HepG2 (cell line): ENCODE measurements at regions of chr3 and their contacts with region 1.

Region 1: GRCh38 chr3:161423911-161424522 is 52.7 kb upstream of the SPTSSB start:
- DNase-seq: peak; percentile 41
- ATAC-seq: no peak
- H3K4me3 ChIP-seq: no peak overlapping the region
- H3K27ac ChIP-seq: no peak overlapping the region
- H3K4me1 ChIP-seq: peaks cover 53% of the 10 kb centered on the region
- H3K27me3 ChIP-seq: peaks cover 0 to 4% of the 10 kb centered on the region in 2 experiments; a peak in 1 of 5 replicates
- CTCF ChIP-seq: peak; percentile 64
- EP300 ChIP-seq: no peak
- POLR2A ChIP-seq: no peak
- RAD21 ChIP-seq: peak; percentile 67; the same call in 1 of the 2 replicates

Region 2: GRCh38 chr3:160686955-160687535 is 737.0 kb before region 1 on chr3:
- CTCF ChIA-PET with region 1: no interaction called
- POLR2A ChIA-PET with region 1: no interaction called
- in situ Hi-C with region 1: no loop called
- intact Hi-C with region 1: loop called (anchors 5 kb)
- DNase-seq: peak; percentile 6
- ATAC-seq: no peak
- H3K4me3 ChIP-seq: no peak overlapping the region
- H3K27ac ChIP-seq: no peak overlapping the region
- H3K4me1 ChIP-seq: no peaks in the 10 kb centered on the region
- H3K27me3 ChIP-seq: no peaks in the 10 kb centered on the region; a peak in 1 of 5 replicates
- CTCF ChIP-seq: 0 out of 2 replicates have a peak, but pooled peaks have one; percentile 9
- EP300 ChIP-seq: no peak
- POLR2A ChIP-seq: no peak
- RAD21 ChIP-seq: no peak

Region 3: DNA sequence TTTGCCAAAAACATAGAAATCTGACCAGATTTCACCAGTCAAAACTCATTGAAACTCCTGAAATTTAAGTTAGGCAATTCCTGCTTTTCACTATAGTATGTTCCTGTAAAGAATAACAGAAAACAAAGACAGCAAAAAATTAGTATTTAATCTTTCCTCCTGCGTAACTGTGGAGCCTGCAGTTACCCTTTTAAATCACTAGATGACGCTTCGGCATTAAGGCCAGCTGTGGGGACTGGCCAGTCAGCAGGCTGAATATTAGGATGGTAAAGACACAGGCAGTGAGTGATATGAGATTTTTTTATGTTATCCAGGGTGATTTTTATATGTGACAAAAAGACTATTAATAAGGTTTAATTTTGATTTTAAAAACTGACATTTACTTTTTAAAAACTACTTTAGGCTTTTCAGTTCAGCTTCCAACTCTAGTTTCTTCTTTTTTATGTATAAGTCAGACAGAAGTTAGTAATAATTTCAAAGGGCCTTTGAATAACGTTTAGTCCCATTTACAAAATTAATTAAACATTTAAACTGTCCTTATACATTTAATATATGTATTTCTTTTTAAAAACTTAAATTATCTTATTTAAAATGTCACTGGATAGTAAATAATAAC is 502.9 kb before region 1 on chr3:
- CTCF ChIA-PET with region 1: interaction called, 5 read pairs
- POLR2A ChIA-PET with region 1: no interaction called
- in situ Hi-C with region 1: loop called (anchors 10 kb)
- intact Hi-C with region 1: loop called (anchors 1 kb)
- DNase-seq: peak; percentile 30
- ATAC-seq: peak; percentile 96
- H3K4me3 ChIP-seq: no peak overlapping the region
- H3K27ac ChIP-seq: no peak overlapping the region
- H3K4me1 ChIP-seq: no peaks in the 10 kb centered on the region
- H3K27me3 ChIP-seq: no peaks in the 10 kb centered on the region
- CTCF ChIP-seq: peak; percentile 84
- EP300 ChIP-seq: no peak
- POLR2A ChIP-seq: no peak
- RAD21 ChIP-seq: peak; percentile 55

Region 4: GRCh38 chr3:160956806-160957205 is 467.2 kb before region 1 on chr3:
- CTCF ChIA-PET with region 1: no interaction called
- POLR2A ChIA-PET with region 1: no interaction called
- in situ Hi-C with region 1: no loop called
- intact Hi-C with region 1: loop called (anchors 5 kb)
- DNase-seq: peak; percentile 8
- ATAC-seq: peak; percentile 84
- H3K4me3 ChIP-seq: no peak overlapping the region
- H3K27ac ChIP-seq: no peak overlapping the region
- H3K4me1 ChIP-seq: no peaks in the 10 kb centered on the region
- H3K27me3 ChIP-seq: no peaks in the 10 kb centered on the region
- CTCF ChIP-seq: peak; percentile 55
- EP300 ChIP-seq: no peak
- POLR2A ChIP-seq: no peak
- RAD21 ChIP-seq: no peak

Region 5: GRCh38 chr3:161220850-161221753 is 202.9 kb before region 1 on chr3 and contains the start of gene NMD3:
- CTCF ChIA-PET with region 1: no interaction called
- POLR2A ChIA-PET with region 1: interaction called, 4 read pairs
- in situ Hi-C with region 1: no loop called
- intact Hi-C with region 1: loop called (anchors 2 kb)
- DNase-seq: peak; percentile 87
- ATAC-seq: peak; percentile 96
- H3K4me3 ChIP-seq: peak within 1 kb of the TSS; percentile 84 to 99 (median 92)
- H3K27ac ChIP-seq: peak within 1 kb of the TSS; percentile 90
- H3K4me1 ChIP-seq: peaks cover 42% of the 10 kb centered on the region
- H3K27me3 ChIP-seq: no peaks in the 10 kb centered on the region; a peak in 2 of 5 replicates
- CTCF ChIP-seq: no peak
- EP300 ChIP-seq: 0 out of 4 replicates have a peak, but pooled peaks of 1 of the 2 experiments have one; percentile 0
- POLR2A ChIP-seq: peak; percentile 79 to 88
- RAD21 ChIP-seq: 0 out of 2 replicates have a peak, but pooled peaks have one; percentile 19
- total RNA-seq, gene NMD3: 55.2 and 95.4 TPM in 2 replicates